Activated CD4-positive, alpha-beta T cell treated with anti-CD3 and anti-CD28 coated beads for 36 hours (primary cell): ENCODE measurements at regions of chr17 and their contacts with region 1.

Region 1: GRCh38 chr17:8125157-8125946 is 1.4 kb upstream of the HES7 start:
- DNase-seq: peak; percentile 92
- ATAC-seq: peak; percentile 16
- H3K4me3 Mint-ChIP-seq: peak overlapping the region; percentile 90
- H3K27ac Mint-ChIP-seq: peak overlapping the region; percentile 79
- H3K4me1 Mint-ChIP-seq: peaks cover 51% of the 10 kb centered on the region
- H3K27me3 Mint-ChIP-seq: peaks cover 19% of the 10 kb centered on the region

Region 2: GRCh38 chr17:8138672-8139371 is 13.5 kb after region 1 on chr17:
- CTCF ChIA-PET with region 1: interaction called, 60 read pairs
- POLR2A ChIA-PET with region 1: interaction called, 15 read pairs
- intact Hi-C with region 1: loop called (anchors 1 kb)
- DNase-seq: peak; percentile 98
- ATAC-seq: peak; percentile 90
- H3K4me3 Mint-ChIP-seq: no peak overlapping the region
- H3K27ac Mint-ChIP-seq: no peak overlapping the region
- H3K4me1 Mint-ChIP-seq: no peaks in the 10 kb centered on the region
- H3K27me3 Mint-ChIP-seq: no peaks in the 10 kb centered on the region

Region 3: DNA sequence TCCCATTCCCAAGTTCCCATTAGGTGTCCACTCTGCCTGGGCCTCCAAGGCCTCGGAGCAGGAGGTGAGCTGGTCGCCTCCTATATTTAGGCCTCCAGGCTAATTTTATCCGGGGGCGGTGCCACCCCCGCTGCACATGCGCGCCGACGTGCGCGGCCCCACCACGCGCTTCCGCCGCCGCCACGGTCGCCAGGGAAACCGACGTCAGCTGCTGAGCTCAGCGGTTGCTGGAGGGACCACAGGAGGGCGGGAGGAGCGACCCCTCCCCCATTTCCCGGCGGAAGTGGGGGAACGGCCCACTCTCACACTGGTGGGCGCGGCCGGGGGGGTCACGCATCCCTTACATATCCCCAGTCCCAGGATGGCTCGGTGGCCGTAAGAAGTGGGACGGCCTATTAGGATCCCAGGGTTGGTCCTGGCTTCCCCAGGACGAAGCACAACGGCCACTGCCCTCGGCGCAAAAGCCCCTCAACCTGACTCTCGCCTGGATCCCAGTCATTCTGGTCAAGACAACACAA is 25.8 kb after region 1 on chr17:
- CTCF ChIA-PET with region 1: interaction called, 88 read pairs
- POLR2A ChIA-PET with region 1: interaction called, 5 read pairs
- intact Hi-C with region 1: loop called (anchors 1 kb)
- DNase-seq: peak; percentile 93
- ATAC-seq: peak; percentile 35
- H3K4me3 Mint-ChIP-seq: no peak overlapping the region
- H3K27ac Mint-ChIP-seq: peak overlapping the region; percentile 80
- H3K4me1 Mint-ChIP-seq: peaks cover 30% of the 10 kb centered on the region
- H3K27me3 Mint-ChIP-seq: no peaks in the 10 kb centered on the region